ENCODE measurements at regions of chr6 and their contacts with region 1.

Region 1: DNA sequence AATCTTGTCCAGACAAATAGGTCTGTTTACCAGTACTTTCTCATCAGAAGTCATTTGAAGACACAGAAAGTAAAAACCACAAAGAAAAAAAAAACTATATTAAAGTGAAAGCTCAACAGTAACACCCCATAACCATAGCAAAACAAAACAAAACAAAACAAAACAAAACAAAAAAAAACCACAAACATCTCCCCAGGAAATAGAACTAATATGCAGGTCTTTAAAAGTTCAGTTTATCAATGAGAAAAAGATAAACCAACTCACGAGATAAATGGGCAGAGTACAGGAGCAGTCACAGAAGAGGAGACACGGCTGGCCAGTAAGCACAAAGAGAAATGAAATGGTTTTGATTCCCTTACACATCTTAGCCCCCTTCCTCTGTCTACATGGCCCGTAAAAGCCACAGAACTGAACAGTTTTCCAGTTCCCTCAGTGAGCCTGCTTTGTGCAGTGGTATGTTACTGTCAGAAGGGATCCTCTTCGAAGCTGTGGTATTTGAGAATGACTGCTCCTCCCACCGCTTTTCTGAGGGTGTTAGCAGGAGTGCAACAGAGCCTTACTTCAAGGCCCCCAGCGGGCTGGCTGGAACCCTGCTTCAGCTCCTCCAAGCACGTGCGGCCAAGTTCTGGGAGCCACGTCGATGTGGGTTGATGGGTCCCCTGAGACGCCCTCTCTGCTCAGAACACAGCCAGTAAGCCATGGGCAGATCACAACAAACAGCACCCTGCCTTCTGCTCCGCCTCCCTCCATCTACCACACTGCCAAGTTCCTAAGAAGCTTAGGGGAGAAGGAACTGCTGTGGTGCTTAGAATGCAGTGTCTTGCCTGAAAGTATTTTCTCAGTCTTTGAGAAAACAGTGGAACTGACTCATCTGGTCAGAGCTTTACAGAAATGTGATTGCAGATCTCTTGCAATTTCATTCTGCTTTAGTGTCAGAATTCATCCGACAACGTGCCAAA is 14.0 kb downstream of the UST start:
- DNase-seq: peak; percentile 64
- ATAC-seq: peak; percentile 63
- H3K4me3 ChIP-seq: peak overlapping the region; percentile 39; the same call in 1 of the 2 replicates
- H3K27ac ChIP-seq: peak overlapping the region; percentile 85
- H3K4me1 ChIP-seq: peaks cover 43% of the 10 kb centered on the region
- H3K27me3 ChIP-seq: no peaks in the 10 kb centered on the region
- CTCF ChIP-seq: no peak
- EP300 ChIP-seq: peak; percentile 40 to 75; a peak in 3 of 4 replicates
- POLR2A ChIP-seq: peak; percentile 73
- RAD21 ChIP-seq: no peak

Region 2: DNA sequence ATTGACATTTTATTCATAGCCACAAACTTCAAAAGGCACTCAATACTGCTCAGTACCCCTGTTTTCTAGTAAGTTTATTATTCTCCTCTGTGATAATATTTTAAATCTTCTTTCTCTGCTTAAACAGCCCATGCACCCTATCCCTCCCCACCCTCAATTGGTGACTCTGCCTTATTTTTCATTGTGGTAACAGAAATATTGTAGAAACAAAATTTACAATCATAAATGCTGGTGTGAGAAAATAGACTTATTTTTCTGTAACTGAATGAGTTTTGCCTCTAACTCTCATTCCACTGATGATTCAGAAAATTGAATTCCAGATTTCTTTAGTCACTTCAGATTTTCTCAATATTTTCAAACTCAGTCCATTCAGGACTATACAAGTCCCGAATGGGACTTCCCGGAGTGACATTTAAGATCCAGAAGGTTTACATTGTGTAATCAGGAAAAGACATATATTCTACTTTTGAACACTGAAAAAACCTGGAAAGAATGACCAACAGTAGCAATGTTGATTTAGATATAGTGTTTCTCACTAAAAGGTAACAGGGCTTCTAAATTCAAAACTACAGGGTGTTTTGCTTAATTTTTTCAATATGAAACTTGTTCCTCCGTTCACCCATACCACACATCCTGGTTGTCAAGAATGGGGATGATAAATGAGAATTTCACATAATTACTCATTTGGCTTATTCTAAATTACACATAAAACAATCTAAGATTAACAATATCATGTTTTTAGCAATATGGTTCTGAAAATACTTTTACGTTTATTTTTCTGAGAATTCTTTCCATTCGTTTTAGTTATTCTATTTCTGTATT is 48.8 kb before region 1 on chr6:
- CTCF ChIA-PET with region 1: no interaction called
- POLR2A ChIA-PET with region 1: no interaction called
- RAD21 ChIA-PET with region 1: no interaction called
- SMC1A ChIA-PET with region 1: no interaction called
- in situ Hi-C with region 1: no loop called
- intact Hi-C with region 1: no loop called
- DNase-seq: no peak
- ATAC-seq: no peak
- H3K4me3 ChIP-seq: no peak overlapping the region
- H3K27ac ChIP-seq: no peak overlapping the region
- H3K4me1 ChIP-seq: no peaks in the 10 kb centered on the region
- H3K27me3 ChIP-seq: no peaks in the 10 kb centered on the region; a peak in 2 of 4 replicates
- CTCF ChIP-seq: no peak
- EP300 ChIP-seq: no peak
- POLR2A ChIP-seq: no peak
- RAD21 ChIP-seq: no peak

Region 3: GRCh38 chr6:148746363-148747144 is 14.3 kb before region 1 on chr6 and contains the start of gene UST:
- CTCF ChIA-PET with region 1: interaction called, 8 read pairs
- POLR2A ChIA-PET with region 1: no interaction called
- RAD21 ChIA-PET with region 1: interaction called, 52 read pairs
- SMC1A ChIA-PET with region 1: interaction called, 42 read pairs
- in situ Hi-C with region 1: no loop called
- intact Hi-C with region 1: loop called (anchors 2 kb)
- DNase-seq: no peak
- ATAC-seq: peak; percentile 47
- H3K4me3 ChIP-seq: peak within 1 kb of the TSS; percentile 64
- H3K27ac ChIP-seq: no peak within 1 kb of the TSS
- H3K4me1 ChIP-seq: no peaks in the 10 kb centered on the region
- H3K27me3 ChIP-seq: peaks cover 1 to 17% of the 10 kb centered on the region in 2 experiments; a peak in 3 of 4 replicates
- CTCF ChIP-seq: peak; percentile 47 to 70 (median 57)
- EP300 ChIP-seq: no peak
- POLR2A ChIP-seq: no peak
- RAD21 ChIP-seq: peak; percentile 85
- polyA plus RNA-seq, gene UST: 3.6 to 3.7 TPM

Region 4: DNA sequence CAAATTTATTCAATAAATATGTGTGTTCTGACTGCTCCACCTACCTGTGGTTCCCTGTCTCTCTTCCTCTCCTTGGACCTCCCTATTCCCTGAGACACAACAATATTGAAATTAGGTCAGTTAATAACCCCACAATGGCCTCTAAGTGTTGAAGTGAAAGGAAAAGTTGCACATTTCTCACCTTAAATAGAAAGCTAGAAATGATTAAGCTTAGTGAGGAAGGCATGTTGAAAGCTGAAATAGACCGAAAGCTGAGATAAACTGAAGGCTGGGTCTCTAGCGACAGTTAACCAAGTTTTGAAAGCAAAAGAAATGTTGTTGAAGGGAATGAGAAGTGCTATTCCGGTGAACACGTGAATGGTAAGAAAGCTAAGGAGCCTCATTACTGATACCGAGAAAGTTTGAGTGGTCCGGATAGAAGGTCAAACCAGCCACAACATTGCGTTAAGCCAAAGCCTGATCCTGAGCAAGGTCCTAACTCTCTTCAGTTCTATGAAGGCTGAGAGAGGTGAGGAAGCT is 20.1 kb after region 1 on chr6:
- CTCF ChIA-PET with region 1: interaction called, 23 read pairs
- POLR2A ChIA-PET with region 1: interaction called, 13 read pairs
- RAD21 ChIA-PET with region 1: interaction called, 37 read pairs
- SMC1A ChIA-PET with region 1: interaction called, 56 read pairs
- in situ Hi-C with region 1: no loop called
- intact Hi-C with region 1: loop called (anchors 2 kb)
- DNase-seq: peak; percentile 73
- ATAC-seq: peak; percentile 97
- H3K4me3 ChIP-seq: no peak overlapping the region
- H3K27ac ChIP-seq: no peak overlapping the region
- H3K4me1 ChIP-seq: peaks cover 8% of the 10 kb centered on the region
- H3K27me3 ChIP-seq: 0 out of 4 replicates have a peak, but pooled peaks cover 0 to 1% of the 10 kb centered on the region in 2 experiments
- CTCF ChIP-seq: peak in 1 of 3 experiments; percentile 19; a peak in 1 of 6 replicates
- EP300 ChIP-seq: 0 out of 4 replicates have a peak, but pooled peaks of 1 of the 2 experiments have one; percentile 9
- POLR2A ChIP-seq: no peak
- RAD21 ChIP-seq: no peak

Region 5: GRCh38 chr6:148866657-148867268 is 105.9 kb after region 1 on chr6:
- CTCF ChIA-PET with region 1: interaction called, 3 read pairs
- POLR2A ChIA-PET with region 1: interaction called, 3 read pairs
- RAD21 ChIA-PET with region 1: interaction called, 4 read pairs
- SMC1A ChIA-PET with region 1: interaction called, 9 read pairs
- in situ Hi-C with region 1: no loop called
- intact Hi-C with region 1: loop called (anchors 2 kb)
- DNase-seq: peak; percentile 68
- ATAC-seq: peak; percentile 98
- H3K4me3 ChIP-seq: no peak overlapping the region
- H3K27ac ChIP-seq: no peak overlapping the region
- H3K4me1 ChIP-seq: no peaks in the 10 kb centered on the region
- H3K27me3 ChIP-seq: no peaks in the 10 kb centered on the region
- CTCF ChIP-seq: no peak
- EP300 ChIP-seq: peak in 1 of 2 experiments; percentile 72; a peak in 1 of 4 replicates
- POLR2A ChIP-seq: no peak
- RAD21 ChIP-seq: 0 out of 2 replicates have a peak, but pooled peaks have one; percentile 10